ENCODE measurements at regions of chr7 and their contacts with region 1.

Region 1: DNA sequence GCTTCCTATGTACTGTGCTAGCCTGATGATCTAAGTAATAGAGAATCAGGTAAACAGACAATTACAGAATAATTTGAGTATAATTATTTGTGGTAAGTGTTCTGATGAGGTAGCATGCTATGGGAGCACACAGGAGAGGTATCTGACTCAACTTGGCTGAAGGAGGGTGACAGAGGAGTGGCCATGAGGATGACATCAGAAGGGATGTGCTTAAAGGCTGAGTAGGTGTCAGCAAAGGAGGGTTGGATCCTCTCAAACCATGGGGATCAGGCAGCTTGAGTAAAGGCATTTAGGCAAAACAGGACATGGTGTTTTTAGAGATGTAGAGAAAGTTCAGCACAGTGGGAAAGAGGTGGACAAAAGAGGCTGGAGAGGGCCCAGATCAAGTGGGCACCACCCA is 29.0 kb downstream of the KLHDC10 start:
- DNase-seq: no peak
- ATAC-seq: no peak
- H3K4me3 ChIP-seq: no peak overlapping the region
- H3K27ac ChIP-seq: no peak overlapping the region
- H3K4me1 ChIP-seq: peaks cover 0 to 21% of the 10 kb centered on the region in 2 donors
- H3K27me3 ChIP-seq: no peaks in the 10 kb centered on the region
- CTCF ChIP-seq: no peak
- POLR2A ChIP-seq: no peak

Region 2: DNA sequence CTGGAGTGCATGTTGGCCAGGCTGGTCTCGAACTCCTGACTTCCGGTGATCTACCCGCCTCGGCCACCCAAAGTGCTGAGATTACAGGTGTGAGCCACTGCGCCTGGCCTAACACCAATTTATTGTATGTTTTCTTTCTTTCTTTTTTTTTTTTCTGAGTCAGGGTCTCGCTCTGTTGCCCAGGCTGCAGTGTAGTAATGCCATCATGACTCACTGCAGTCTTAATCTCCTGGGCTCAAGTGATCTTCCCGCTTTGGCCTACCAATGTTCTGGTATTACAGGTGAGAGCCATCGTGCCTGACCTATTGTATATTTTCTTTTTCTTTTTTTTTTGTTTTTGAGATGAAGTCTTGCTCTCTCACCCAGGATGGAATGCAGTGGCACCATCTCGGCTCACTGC is 112.7 kb before region 1 on chr7:
- in situ Hi-C with region 1: no loop called
- intact Hi-C with region 1: no loop called
- DNase-seq: no peak
- ATAC-seq: no peak
- H3K4me3 ChIP-seq: no peak overlapping the region
- H3K27ac ChIP-seq: no peak overlapping the region
- H3K4me1 ChIP-seq: peaks cover 7 to 9% of the 10 kb centered on the region in 2 donors
- H3K27me3 ChIP-seq: no peaks in the 10 kb centered on the region
- CTCF ChIP-seq: no peak
- POLR2A ChIP-seq: no peak

Region 3: GRCh38 chr7:130135208-130136205 is 36.2 kb after region 1 on chr7:
- in situ Hi-C with region 1: no loop called
- intact Hi-C with region 1: loop called (anchors 1 kb)
- DNase-seq: no peak
- ATAC-seq: no peak
- H3K4me3 ChIP-seq: no peak overlapping the region
- H3K27ac ChIP-seq: no peak overlapping the region
- H3K4me1 ChIP-seq: no peaks in the 10 kb centered on the region
- H3K27me3 ChIP-seq: no peaks in the 10 kb centered on the region
- CTCF ChIP-seq: no peak
- POLR2A ChIP-seq: no peak